ENCODE measurements at regions of chr5 and their contacts with region 1.

Region 1: GRCh38 chr5:100818340-100818739 is 84.7 kb downstream of the ST8SIA4 start:
- DNase-seq: no peak
- H3K4me3 ChIP-seq: no peak overlapping the region
- H3K27ac ChIP-seq: no peak overlapping the region
- H3K4me1 ChIP-seq: peaks cover 9% of the 10 kb centered on the region
- CTCF ChIP-seq: no peak

Region 2: GRCh38 chr5:100535060-100536005 is 283.0 kb before region 1 on chr5 and contains the start of gene FAM174A:
- CTCF ChIA-PET with region 1: no interaction called
- POLR2A ChIA-PET with region 1: no interaction called
- intact Hi-C with region 1: no loop called
- DNase-seq: peak; percentile 93
- H3K4me3 ChIP-seq: peak within 1 kb of the TSS; percentile 67
- H3K27ac ChIP-seq: no peak within 1 kb of the TSS
- H3K4me1 ChIP-seq: no peaks in the 10 kb centered on the region
- CTCF ChIP-seq: no peak
- total RNA-seq, gene FAM174A: 0.64 and 1.2 TPM in 2 replicates

Region 3: GRCh38 chr5:100803397-100803796 is 14.9 kb before region 1 on chr5:
- CTCF ChIA-PET with region 1: no interaction called
- POLR2A ChIA-PET with region 1: interaction called, 19 read pairs
- intact Hi-C with region 1: no loop called
- DNase-seq: no peak
- H3K4me3 ChIP-seq: no peak overlapping the region
- H3K27ac ChIP-seq: no peak overlapping the region
- H3K4me1 ChIP-seq: peaks cover 4% of the 10 kb centered on the region
- CTCF ChIP-seq: no peak

Region 4: DNA sequence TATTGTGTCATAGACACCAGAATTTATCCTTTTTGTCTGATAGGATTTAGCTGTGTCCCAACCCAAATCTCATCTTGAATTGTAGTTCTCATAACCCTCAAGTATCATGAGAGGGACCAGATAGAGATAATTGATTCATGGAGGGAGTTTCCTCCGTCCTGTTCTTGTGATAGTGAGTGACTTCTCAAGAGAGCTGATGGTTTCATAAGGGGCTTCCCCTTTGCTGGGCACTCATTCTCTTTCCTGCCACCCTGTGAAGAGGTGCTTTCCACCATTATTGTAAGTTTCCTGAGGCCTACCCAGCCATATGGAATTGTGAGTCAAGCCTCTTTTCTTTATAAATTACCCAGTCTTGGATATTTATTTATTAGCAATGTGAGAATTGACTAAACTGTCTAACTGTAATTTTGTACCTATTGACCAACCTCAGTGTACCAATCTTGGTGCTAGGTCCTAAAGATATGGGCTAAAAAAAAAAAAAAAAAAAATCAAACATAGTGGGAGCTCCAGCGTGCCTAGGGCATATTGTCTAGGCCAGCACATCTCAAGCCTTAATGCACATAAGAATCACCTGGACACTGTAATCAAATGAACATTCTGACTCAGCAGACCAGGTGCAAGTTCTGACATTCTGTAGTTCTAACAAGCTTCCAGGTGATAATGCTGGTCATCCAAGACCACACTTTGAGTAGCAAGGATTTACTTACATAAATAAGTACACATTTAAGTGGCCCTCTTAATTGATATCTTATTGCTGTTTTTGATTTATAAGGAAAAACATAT is 54.3 kb after region 1 on chr5:
- CTCF ChIA-PET with region 1: no interaction called
- POLR2A ChIA-PET with region 1: no interaction called
- intact Hi-C with region 1: no loop called
- DNase-seq: no peak
- H3K4me3 ChIP-seq: no peak overlapping the region
- H3K27ac ChIP-seq: no peak overlapping the region
- H3K4me1 ChIP-seq: no peaks in the 10 kb centered on the region
- CTCF ChIP-seq: no peak